Lower leg skin (tissue), 4 donors: ENCODE measurements at regions of chr15 and their contacts with region 1.

Region 1: GRCh38 chr15:99213187-99213811 is 36.1 kb downstream of the TTC23 start:
- DNase-seq: peak; percentile 69 to 95
- H3K4me3 ChIP-seq: no peak overlapping the region
- CTCF ChIP-seq: peak in 1 of 3 donors; percentile 73
- POLR2A ChIP-seq: no peak

Region 2: DNA sequence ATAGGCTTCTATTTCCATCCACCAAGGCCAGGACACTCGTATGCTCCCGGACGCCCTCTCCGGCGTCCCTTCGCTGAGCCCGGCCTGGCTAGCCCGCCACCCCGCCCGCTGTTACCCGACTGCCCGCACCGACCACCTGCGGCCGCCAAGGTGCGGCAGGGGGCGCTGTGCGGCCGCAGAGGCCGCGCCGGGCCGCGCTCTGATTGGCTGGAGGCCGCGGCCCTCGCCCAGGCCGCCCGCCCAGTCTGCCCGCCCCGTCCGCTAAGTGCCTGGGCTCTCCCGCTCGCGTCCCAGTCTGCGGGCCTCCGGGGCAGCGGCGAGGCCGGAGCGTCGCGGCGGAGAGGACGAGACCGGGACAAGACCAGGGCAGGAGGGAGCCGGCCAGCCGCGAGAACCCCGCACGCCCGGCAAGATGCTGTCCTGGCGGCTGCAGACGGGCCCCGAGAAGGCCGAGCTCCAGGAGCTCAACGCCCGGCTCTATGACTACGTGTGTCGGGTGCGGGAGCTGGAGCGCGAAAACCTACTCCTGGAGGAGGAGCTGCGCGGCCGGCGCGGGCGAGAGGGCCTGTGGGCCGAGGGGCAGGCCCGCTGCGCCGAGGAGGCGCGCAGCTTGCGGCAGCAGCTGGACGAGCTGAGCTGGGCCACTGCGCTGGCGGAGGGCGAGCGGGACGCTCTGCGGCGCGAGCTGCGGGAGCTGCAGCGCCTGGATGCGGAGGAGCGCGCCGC is 108.3 kb before region 1 on chr15 and contains the start of gene SYNM:
- intact Hi-C with region 1: loop called (anchors 5 kb)
- DNase-seq: peak in 1 of 2 donors; percentile 90
- H3K4me3 ChIP-seq: peak within 1 kb of the TSS; percentile 28
- CTCF ChIP-seq: no peak
- POLR2A ChIP-seq: no peak
- total RNA-seq, gene SYNM: 4.7 to 32.8 (median 10.7) TPM

Region 3: DNA sequence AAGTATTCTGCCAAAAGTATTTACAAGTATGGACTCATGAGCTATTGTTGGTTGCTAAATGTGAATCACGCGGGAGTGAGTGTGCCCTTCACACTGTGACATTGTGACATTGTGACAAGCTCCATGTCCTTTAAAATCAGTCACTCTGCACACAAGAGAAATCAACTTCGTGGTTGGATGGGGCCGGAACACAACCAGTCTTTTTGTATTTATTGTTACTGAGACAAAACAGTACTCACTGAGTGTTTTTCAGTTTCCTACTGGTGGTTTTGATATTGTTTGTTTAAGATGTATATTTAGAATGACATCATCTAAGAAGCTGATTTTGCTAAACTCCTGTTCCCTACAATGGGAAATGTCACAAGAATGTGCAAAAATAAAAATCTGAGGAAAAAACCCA is 78.1 kb before region 1 on chr15:
- intact Hi-C with region 1: no loop called
- DNase-seq: no peak
- H3K4me3 ChIP-seq: no peak overlapping the region
- CTCF ChIP-seq: no peak
- POLR2A ChIP-seq: no peak